ENCODE measurements at regions of chr17 and their contacts with region 1.

Region 1: DNA sequence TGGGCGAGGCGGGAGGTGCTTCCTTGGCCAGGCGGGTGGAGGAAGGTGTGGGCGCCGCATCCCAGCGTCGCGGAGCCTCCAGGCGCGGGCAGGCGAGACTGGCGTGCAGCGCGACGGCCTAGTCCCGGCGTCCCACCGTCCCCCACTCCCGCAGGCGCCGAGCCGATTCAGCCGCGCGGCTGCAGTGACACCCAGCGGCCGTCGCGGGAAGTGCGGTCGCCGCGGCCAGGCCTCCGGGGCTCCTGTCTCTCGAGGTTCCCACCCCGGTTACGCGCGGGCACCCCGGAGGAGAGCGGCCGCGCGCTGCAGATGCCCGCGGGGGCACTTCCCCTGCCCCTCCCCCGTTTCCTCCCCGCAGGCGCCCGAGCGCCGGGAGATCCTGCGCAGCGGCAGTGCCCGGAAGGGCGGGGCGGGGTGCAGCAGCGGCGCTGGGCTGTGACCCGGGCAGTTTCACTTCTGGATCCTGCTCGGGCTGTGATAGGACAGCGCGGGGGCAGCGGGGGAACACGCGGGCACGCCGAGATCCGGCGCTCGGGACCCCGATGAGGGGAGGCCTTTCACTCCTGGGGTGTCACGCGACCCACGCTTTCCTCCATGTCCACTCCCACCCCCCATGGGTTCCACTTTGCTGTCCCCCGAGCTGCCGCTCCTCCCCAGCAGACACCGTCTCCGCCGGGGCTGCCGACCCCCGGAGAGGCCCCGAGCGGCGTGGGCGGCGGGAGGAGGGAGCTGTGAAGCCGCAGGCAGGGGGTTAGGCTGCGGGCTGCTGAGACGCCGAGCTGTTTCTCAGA is 16.6 kb downstream of the GRB7 start:
- DNase-seq: peak; percentile 86 to 95
- H3K4me3 ChIP-seq: peak overlapping the region; percentile 85
- H3K4me3 Mint-ChIP-seq: peak overlapping the region; percentile 71
- H3K27ac Mint-ChIP-seq: peak overlapping the region; percentile 57
- H3K4me1 ChIP-seq: peaks cover 16% of the 10 kb centered on the region
- H3K4me1 Mint-ChIP-seq: peaks cover 8% of the 10 kb centered on the region
- H3K27me3 ChIP-seq: no peaks in the 10 kb centered on the region
- H3K27me3 Mint-ChIP-seq: peaks cover 4% of the 10 kb centered on the region
- CTCF ChIP-seq: peak; percentile 84 to 99

Region 2: DNA sequence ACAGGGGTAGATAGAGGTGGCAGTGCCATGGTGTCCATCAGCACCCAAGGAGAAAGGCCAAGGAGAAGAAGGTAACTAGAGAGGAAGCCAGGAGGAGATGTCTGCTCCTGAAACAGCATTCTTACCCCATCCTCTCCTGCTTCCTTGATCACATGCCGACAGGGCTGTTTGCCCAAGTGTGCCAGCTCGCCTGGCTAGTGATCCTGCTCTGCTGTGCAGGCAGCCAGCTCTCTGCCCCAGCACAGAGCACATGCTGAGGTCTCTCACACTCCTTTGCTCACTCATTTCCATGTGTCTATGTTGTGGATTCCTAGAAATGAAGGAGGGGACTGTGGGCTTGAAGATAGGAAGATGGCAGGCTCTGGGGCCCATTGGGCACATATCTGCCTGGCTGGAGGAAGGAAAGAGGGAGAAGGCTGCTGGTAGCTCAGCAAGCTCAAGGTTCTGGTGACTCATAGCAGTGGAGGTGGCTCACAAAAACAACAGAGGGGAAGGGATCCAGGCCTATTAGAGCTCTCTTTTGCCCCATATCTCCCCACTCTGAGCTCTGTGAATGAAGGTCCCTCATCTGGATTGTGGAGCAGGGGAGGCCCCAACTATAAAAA is 200.9 kb before region 1 on chr17:
- CTCF ChIA-PET with region 1: no interaction called
- POLR2A ChIA-PET with region 1: no interaction called
- intact Hi-C with region 1: loop called (anchors 10 kb)
- DNase-seq: no peak
- H3K4me3 ChIP-seq: no peak overlapping the region
- H3K4me3 Mint-ChIP-seq: no peak overlapping the region
- H3K27ac Mint-ChIP-seq: no peak overlapping the region
- H3K4me1 ChIP-seq: no peaks in the 10 kb centered on the region
- H3K4me1 Mint-ChIP-seq: no peaks in the 10 kb centered on the region
- H3K27me3 ChIP-seq: no peaks in the 10 kb centered on the region
- H3K27me3 Mint-ChIP-seq: no peaks in the 10 kb centered on the region
- CTCF ChIP-seq: no peak

Region 3: GRCh38 chr17:39730095-39730921 is 24.0 kb before region 1 on chr17 and contains the start of gene MIEN1:
- CTCF ChIA-PET with region 1: interaction called, 15 read pairs
- POLR2A ChIA-PET with region 1: interaction called, 5 read pairs
- intact Hi-C with region 1: loop called (anchors 1 kb)
- DNase-seq: peak; percentile 92 to 98
- H3K4me3 ChIP-seq: peak within 1 kb of the TSS; percentile 57
- H3K4me3 Mint-ChIP-seq: peak within 1 kb of the TSS; percentile 84
- H3K27ac Mint-ChIP-seq: peak within 1 kb of the TSS; percentile 91
- H3K4me1 ChIP-seq: peaks cover 11% of the 10 kb centered on the region
- H3K4me1 Mint-ChIP-seq: no peaks in the 10 kb centered on the region
- H3K27me3 ChIP-seq: no peaks in the 10 kb centered on the region
- H3K27me3 Mint-ChIP-seq: no peaks in the 10 kb centered on the region
- CTCF ChIP-seq: peak; percentile 74 to 95
- total RNA-seq, gene MIEN1: 42.9 and 46.3 TPM in 2 replicates

Region 4: DNA sequence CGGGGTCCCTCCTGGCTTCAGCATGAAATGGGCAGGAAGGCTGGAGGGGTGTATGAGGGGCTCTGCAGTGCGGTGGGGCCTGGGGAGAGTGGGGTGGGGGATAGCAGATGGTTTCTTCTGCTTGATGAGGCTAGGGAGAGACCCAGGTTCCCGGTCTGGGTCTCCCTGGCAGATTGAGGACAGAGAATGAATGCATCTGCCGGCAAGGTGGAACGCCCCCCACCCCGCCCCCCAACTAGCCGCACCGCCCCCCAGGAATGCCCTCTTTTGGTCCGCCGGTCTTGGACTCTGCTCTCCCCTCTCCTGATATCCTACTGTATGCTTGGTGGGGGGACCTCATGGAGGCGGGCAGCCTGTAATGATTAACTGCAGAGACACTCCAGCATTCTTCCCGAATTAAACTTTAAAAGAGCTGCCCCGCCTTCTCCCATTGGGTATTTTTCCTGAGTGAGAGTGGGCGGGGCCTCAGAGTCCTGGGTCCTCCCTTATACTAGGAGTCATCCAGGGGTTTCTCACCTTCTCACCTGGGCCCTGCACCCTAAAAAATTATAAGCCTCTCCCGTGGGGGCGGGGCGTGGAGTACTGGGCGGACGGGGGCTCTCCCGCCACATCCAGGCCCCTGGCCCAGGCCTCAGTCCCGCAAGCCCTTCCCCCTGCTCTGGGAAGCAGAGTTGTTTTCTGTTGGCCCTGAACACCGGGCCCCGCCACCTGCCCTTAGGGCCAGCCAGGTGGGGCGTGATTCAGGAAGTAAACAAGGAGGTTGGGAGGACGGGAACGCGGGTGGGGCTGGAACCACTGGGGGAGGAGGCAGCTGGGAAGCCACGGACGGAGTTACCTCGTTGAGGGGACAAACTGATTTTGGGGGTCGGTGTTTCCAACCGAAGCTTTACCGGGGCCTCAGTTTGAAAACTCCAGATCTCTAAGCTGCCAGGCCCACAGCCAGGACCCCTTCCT is 15.1 kb before region 1 on chr17:
- CTCF ChIA-PET with region 1: interaction called, 8 read pairs
- POLR2A ChIA-PET with region 1: interaction called, 12 read pairs
- intact Hi-C with region 1: loop called (anchors 1 kb)
- DNase-seq: peak; percentile 92 to 95
- H3K4me3 ChIP-seq: peak overlapping the region; percentile 73
- H3K4me3 Mint-ChIP-seq: peak overlapping the region; percentile 96
- H3K27ac Mint-ChIP-seq: peak overlapping the region; percentile 53
- H3K4me1 ChIP-seq: peaks cover 34% of the 10 kb centered on the region
- H3K4me1 Mint-ChIP-seq: peaks cover 22% of the 10 kb centered on the region
- H3K27me3 ChIP-seq: no peaks in the 10 kb centered on the region
- H3K27me3 Mint-ChIP-seq: no peaks in the 10 kb centered on the region
- CTCF ChIP-seq: no peak

Region 5: DNA sequence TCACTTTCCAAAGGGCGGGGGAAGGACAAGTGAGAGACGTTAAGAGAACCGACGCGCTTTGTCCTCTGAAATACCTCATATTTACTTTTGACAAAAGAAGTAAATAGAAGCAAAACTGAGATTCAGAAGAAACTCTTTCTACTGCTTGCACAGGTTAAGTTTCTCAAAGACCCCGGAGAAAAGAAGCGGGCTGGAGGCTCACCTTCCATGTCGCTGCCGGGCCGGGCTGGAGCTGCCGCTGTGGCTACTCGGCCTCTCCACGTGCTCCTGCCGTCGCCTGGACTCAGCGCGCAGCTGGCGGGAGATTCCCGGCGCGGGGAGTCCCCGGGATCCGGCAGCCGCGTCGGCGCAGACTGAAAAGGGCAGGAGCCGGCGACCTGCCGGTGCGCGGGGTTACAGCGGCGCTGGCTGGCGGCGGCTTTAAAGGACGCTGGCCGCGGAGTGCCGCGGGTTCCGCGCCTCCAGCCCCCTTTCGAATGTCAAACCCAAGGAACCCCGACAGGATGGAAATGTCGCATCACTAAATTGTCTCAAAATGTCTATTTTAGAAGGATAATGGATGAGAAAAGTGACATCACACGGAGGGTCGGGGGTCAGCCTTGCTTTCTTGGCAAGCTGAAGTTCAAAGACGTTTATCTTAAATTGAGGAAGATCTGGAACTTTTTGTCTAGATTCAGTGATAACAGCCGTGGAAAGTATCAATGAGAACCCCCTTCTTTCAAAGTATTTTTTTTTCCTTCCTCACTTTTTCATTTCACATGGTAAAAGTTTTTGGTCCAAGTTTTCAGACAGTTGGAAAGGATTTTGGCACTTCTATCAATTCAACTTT is 109.8 kb after region 1 on chr17 and contains the start of gene IKZF3:
- CTCF ChIA-PET with region 1: no interaction called
- POLR2A ChIA-PET with region 1: no interaction called
- intact Hi-C with region 1: loop called (anchors 2 kb)
- DNase-seq: peak; percentile 89 to 92
- H3K4me3 ChIP-seq: peak within 1 kb of the TSS; percentile 27
- H3K4me3 Mint-ChIP-seq: peak within 1 kb of the TSS; percentile 76
- H3K27ac Mint-ChIP-seq: no peak within 1 kb of the TSS
- H3K4me1 ChIP-seq: no peaks in the 10 kb centered on the region
- H3K4me1 Mint-ChIP-seq: no peaks in the 10 kb centered on the region
- H3K27me3 ChIP-seq: no peaks in the 10 kb centered on the region
- H3K27me3 Mint-ChIP-seq: peaks cover 14% of the 10 kb centered on the region
- CTCF ChIP-seq: peak in 1 of 2 experiments; percentile 52
- total RNA-seq, gene IKZF3: 2.4 and 2.8 TPM in 2 replicates